CD8-positive, alpha-beta T cell (primary cell): ENCODE measurements at regions of chr11 and their contacts with region 1.

Region 1: DNA sequence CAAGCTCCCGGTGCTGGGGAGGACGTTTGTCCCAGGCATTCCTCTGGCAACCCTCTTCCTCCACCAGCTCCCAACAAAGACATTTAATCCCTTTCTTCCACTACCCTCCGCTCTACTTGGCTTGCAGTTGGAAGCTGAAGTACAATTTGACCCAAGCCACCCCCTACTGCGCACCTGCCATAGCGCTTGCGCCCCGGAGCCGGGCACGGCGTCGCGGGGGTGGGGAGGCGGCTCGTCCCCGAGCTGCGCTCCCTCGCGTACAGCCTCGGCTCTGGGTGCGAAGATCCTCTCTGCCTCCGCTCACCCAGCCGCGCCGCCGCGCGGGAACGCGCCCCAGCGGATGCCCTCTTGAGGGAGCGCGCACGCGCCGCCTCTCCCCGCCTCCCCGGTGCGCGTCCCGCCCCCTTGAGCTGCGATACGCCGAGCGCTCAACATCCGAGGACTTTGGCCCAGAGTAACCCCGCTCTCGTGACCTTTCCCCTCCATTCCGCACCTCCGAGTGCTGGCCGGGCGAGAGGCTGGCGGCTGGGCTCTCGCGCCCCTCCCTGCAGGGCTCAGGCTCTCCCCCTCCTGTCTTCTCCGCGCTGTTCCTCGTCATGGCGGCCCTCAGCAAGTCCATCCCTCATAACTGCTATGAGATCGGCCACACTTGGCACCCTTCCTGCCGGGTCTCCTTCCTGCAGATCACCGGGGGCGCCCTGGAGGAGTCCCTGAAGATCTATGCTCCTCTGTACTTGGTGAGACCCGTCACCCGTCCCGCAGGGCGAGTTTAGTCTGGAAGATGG is at the start of gene TMEM135:
- DNase-seq: peak; percentile 83 to 96 (median 90)
- ATAC-seq: peak; percentile 94
- H3K4me3 ChIP-seq: peak within 1 kb of the TSS; percentile 85 to 93
- H3K4me3 Mint-ChIP-seq: peak within 1 kb of the TSS; percentile 99
- H3K27ac ChIP-seq: peak within 1 kb of the TSS; percentile 67 to 88
- H3K27ac Mint-ChIP-seq: peak within 1 kb of the TSS; percentile 96
- H3K4me1 ChIP-seq: peaks cover 20% of the 10 kb centered on the region
- H3K4me1 Mint-ChIP-seq: peaks cover 51% of the 10 kb centered on the region
- H3K27me3 ChIP-seq: no peaks in the 10 kb centered on the region
- H3K27me3 Mint-ChIP-seq: no peaks in the 10 kb centered on the region
- CTCF ChIP-seq: no peak
- total RNA-seq, gene TMEM135: 11.0 to 13.7 TPM

Region 2: DNA sequence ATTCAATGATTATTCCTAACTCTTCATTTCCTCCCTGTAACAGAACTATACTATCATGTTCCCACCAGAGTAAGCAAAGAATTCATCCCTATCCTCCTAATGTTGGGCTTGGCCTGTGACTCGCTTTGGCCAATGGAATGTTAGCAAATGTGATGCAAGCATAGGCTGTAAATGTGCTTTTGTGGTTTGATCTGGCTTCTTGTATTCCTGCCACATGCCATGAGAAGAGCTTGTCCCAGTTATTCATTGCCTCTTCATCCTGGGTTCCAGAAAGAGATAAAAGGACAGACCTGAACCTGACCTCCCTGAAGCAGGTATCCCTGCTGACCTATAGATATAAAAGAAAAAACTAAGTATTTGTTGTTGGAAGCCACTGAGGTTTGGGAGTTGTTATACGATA is 1277.7 kb before region 1 on chr11:
- CTCF ChIA-PET with region 1: no interaction called
- POLR2A ChIA-PET with region 1: no interaction called
- intact Hi-C with region 1: loop called in 1 of 2 experiments (anchors 10 kb)
- DNase-seq: no peak
- ATAC-seq: no peak
- H3K4me3 ChIP-seq: no peak overlapping the region
- H3K4me3 Mint-ChIP-seq: no peak overlapping the region
- H3K27ac ChIP-seq: peak overlapping the region in 1 of 2 experiments; percentile 5
- H3K27ac Mint-ChIP-seq: no peak overlapping the region
- H3K4me1 ChIP-seq: peaks cover 45% of the 10 kb centered on the region
- H3K4me1 Mint-ChIP-seq: peaks cover 72% of the 10 kb centered on the region
- H3K27me3 ChIP-seq: no peaks in the 10 kb centered on the region
- H3K27me3 Mint-ChIP-seq: no peaks in the 10 kb centered on the region
- CTCF ChIP-seq: no peak

Region 3: GRCh38 chr11:86302100-86302793 is 735.4 kb before region 1 on chr11 and contains the start of gene HIKESHI:
- CTCF ChIA-PET with region 1: no interaction called
- POLR2A ChIA-PET with region 1: no interaction called
- intact Hi-C with region 1: loop called in 1 of 2 experiments (anchors 5 kb)
- DNase-seq: peak; percentile 74 to 96 (median 93)
- ATAC-seq: peak; percentile 98
- H3K4me3 ChIP-seq: peak within 1 kb of the TSS; percentile 73 to 86
- H3K4me3 Mint-ChIP-seq: peak within 1 kb of the TSS; percentile 99
- H3K27ac ChIP-seq: peak within 1 kb of the TSS; percentile 74 to 76
- H3K27ac Mint-ChIP-seq: peak within 1 kb of the TSS; percentile 99
- H3K4me1 ChIP-seq: peaks cover 22% of the 10 kb centered on the region
- H3K4me1 Mint-ChIP-seq: peaks cover 29% of the 10 kb centered on the region
- H3K27me3 ChIP-seq: no peaks in the 10 kb centered on the region
- H3K27me3 Mint-ChIP-seq: no peaks in the 10 kb centered on the region
- CTCF ChIP-seq: no peak
- total RNA-seq, gene HIKESHI: 4.9 to 6.9 TPM

Region 4: GRCh38 chr11:87007963-87008362 is 29.7 kb before region 1 on chr11:
- CTCF ChIA-PET with region 1: no interaction called
- POLR2A ChIA-PET with region 1: no interaction called
- intact Hi-C with region 1: no loop called
- DNase-seq: no peak
- ATAC-seq: no peak
- H3K4me3 ChIP-seq: no peak overlapping the region
- H3K4me3 Mint-ChIP-seq: no peak overlapping the region
- H3K27ac ChIP-seq: no peak overlapping the region
- H3K27ac Mint-ChIP-seq: no peak overlapping the region
- H3K4me1 ChIP-seq: no peaks in the 10 kb centered on the region
- H3K4me1 Mint-ChIP-seq: no peaks in the 10 kb centered on the region
- H3K27me3 ChIP-seq: no peaks in the 10 kb centered on the region
- H3K27me3 Mint-ChIP-seq: peaks cover 4% of the 10 kb centered on the region
- CTCF ChIP-seq: no peak

Region 5: GRCh38 chr11:87076260-87076783 is 38.7 kb after region 1 on chr11:
- CTCF ChIA-PET with region 1: no interaction called
- POLR2A ChIA-PET with region 1: interaction called, 7 read pairs
- intact Hi-C with region 1: loop called (anchors 2 to 5 kb)
- DNase-seq: no peak
- ATAC-seq: no peak
- H3K4me3 ChIP-seq: no peak overlapping the region
- H3K4me3 Mint-ChIP-seq: no peak overlapping the region
- H3K27ac ChIP-seq: no peak overlapping the region
- H3K27ac Mint-ChIP-seq: no peak overlapping the region
- H3K4me1 ChIP-seq: no peaks in the 10 kb centered on the region
- H3K4me1 Mint-ChIP-seq: peaks cover 13% of the 10 kb centered on the region
- H3K27me3 ChIP-seq: no peaks in the 10 kb centered on the region
- H3K27me3 Mint-ChIP-seq: no peaks in the 10 kb centered on the region
- CTCF ChIP-seq: no peak

Region 6: DNA sequence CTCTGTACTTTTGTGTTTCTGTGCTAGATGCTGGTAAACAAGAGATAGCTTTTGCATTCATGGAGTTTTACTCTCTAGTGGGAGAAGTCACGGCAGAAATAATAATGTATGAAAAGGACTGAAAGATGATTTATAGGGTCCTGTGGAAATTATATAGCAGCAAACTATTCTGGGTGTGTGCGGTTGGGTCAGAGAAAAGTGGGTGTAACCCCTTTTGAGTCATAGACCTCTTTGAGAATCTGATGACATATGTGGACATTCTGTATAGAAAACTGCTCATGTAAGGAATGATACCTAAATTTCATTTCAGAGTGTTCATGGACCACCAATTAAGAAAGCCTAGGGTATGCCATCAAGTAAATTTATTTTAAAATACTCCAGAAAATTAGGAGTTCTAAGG is 54.5 kb after region 1 on chr11:
- CTCF ChIA-PET with region 1: no interaction called
- POLR2A ChIA-PET with region 1: no interaction called
- intact Hi-C with region 1: no loop called
- DNase-seq: no peak
- ATAC-seq: no peak
- H3K4me3 ChIP-seq: no peak overlapping the region
- H3K4me3 Mint-ChIP-seq: no peak overlapping the region
- H3K27ac ChIP-seq: no peak overlapping the region
- H3K27ac Mint-ChIP-seq: no peak overlapping the region
- H3K4me1 ChIP-seq: peaks cover under 1% of the 10 kb centered on the region
- H3K4me1 Mint-ChIP-seq: peaks cover 3% of the 10 kb centered on the region
- H3K27me3 ChIP-seq: no peaks in the 10 kb centered on the region
- H3K27me3 Mint-ChIP-seq: no peaks in the 10 kb centered on the region
- CTCF ChIP-seq: no peak

Region 7: GRCh38 chr11:88337181-88337986 is 1299.7 kb after region 1 on chr11 and contains the start of gene CTSC:
- CTCF ChIA-PET with region 1: no interaction called
- POLR2A ChIA-PET with region 1: no interaction called
- intact Hi-C with region 1: loop called (anchors 5 to 10 kb)
- DNase-seq: peak; percentile 80 to 95 (median 91)
- ATAC-seq: peak; percentile 86
- H3K4me3 ChIP-seq: peak within 1 kb of the TSS; percentile 74 to 97
- H3K4me3 Mint-ChIP-seq: peak within 1 kb of the TSS; percentile 100
- H3K27ac ChIP-seq: peak within 1 kb of the TSS; percentile 52 to 80
- H3K27ac Mint-ChIP-seq: peak within 1 kb of the TSS; percentile 96
- H3K4me1 ChIP-seq: peaks cover 50% of the 10 kb centered on the region
- H3K4me1 Mint-ChIP-seq: peaks cover 79% of the 10 kb centered on the region
- H3K27me3 ChIP-seq: no peaks in the 10 kb centered on the region
- H3K27me3 Mint-ChIP-seq: no peaks in the 10 kb centered on the region
- CTCF ChIP-seq: no peak
- total RNA-seq, gene CTSC: 23.5 to 24.8 TPM